Heart right ventricle (tissue), 16 donors: ENCODE measurements at regions of chr16 and their contacts with region 1.

Region 1: GRCh38 chr16:4116337-4117249 is at the start of gene ADCY9:
- DNase-seq: peak; percentile 68 to 88
- ATAC-seq: peak; percentile 70 to 89 (median 80)
- H3K4me3 ChIP-seq: peak within 1 kb of the TSS; percentile 56 to 80 (median 74)
- H3K27ac ChIP-seq: peak within 1 kb of the TSS; percentile 59 to 89 (median 86)
- H3K4me1 ChIP-seq: peaks cover 13 to 49% (median 44%) of the 10 kb centered on the region in 9 donors
- H3K27me3 ChIP-seq: no peaks in the 10 kb centered on the region
- CTCF ChIP-seq: peak in 1 of 9 donors; percentile 2
- total RNA-seq, gene ADCY9: 37.3 to 57.6 (median 43.4) TPM

Region 2: DNA sequence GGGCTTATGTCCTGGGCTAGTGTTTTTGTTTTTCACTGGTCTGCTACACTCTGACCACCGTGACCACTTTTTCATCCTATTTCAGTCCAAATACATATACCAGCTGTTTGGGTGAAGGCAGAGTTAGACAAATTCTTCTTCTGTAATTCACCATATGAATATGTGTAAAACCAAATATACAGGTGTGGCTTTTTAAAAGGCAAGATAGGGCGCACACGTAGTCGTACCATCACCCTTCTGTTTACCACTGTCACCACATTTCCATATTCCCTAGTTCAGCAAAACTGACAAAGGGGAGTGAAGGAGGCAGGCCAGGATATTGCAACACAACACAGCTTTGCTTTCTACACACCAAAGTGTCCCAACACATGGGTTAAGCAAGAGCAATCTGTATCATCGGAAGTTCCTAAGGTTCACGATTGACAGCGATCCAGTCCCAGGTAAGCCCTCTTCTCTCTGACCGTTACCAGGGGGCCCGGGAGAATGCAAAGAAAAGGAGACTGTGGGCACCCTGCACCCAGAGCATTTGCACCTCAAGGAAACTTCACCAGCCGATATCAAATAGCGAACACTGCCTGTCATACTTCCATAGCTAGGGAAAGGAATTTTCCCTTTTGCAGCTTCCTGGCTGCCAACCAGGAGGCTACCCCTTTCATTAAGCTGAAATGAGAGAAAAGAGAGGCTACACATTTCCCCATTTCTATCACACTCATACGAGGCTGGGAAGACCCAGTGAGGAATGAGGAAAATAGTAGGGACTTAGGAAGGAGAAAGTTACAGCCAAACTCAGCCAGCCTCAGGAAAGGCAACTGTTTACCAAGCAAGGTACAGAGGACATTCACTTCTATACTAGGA is 259.2 kb before region 1 on chr16:
- intact Hi-C with region 1: no loop called
- DNase-seq: no peak
- ATAC-seq: peak; percentile 46 to 88 (median 54)
- H3K4me3 ChIP-seq: no peak overlapping the region
- H3K27ac ChIP-seq: peak overlapping the region in 4 of 10 donors; percentile 3 to 57 (median 33)
- H3K4me1 ChIP-seq: peaks cover 9 to 100% (median 95%) of the 10 kb centered on the region in 9 donors
- H3K27me3 ChIP-seq: no peaks in the 10 kb centered on the region
- CTCF ChIP-seq: no peak

Region 3: GRCh38 chr16:3983081-3983520 is 133.5 kb before region 1 on chr16:
- intact Hi-C with region 1: loop called in 4 of 10 experiments (anchors 5 to 10 kb)
- DNase-seq: peak; percentile 65 to 73
- ATAC-seq: peak; percentile 72 to 88 (median 83)
- H3K4me3 ChIP-seq: no peak overlapping the region
- H3K27ac ChIP-seq: no peak overlapping the region
- H3K4me1 ChIP-seq: peaks cover 0 to 11% (median 0%) of the 10 kb centered on the region in 9 donors
- H3K27me3 ChIP-seq: no peaks in the 10 kb centered on the region
- CTCF ChIP-seq: peak; percentile 29 to 85 (median 74)

Region 4: DNA sequence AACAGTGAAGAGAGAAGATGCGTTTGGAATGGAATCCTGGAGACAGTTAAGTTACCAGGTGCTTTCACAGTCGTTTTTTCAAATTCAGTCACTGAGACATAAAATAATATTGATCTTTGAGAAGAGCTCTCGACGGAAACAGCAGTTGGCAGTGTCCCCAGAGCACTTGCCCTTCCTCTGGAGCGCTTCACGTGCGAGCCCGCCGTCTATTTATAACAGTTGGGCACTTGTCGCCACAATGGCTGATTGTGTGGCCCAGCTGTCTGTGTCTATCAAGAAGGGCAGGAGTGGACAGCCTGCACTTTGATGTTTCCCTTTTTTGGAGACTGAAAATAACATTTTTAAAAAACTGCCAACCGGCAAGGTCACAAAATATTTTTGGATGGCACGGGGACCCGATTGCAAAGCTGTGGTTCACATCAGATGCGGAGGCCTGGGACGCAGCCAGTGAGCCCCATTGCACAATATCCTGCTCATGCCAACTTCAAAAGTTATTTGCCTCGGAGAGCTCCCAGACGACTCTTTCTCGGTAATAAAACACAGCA is 63.2 kb before region 1 on chr16:
- intact Hi-C with region 1: loop called in 2 of 10 experiments (anchors 5 kb)
- DNase-seq: peak; percentile 70 to 78
- ATAC-seq: peak; percentile 78 to 95 (median 90)
- H3K4me3 ChIP-seq: peak overlapping the region in 8 of 10 donors; percentile 2 to 39 (median 26)
- H3K27ac ChIP-seq: peak overlapping the region; percentile 42 to 86 (median 77)
- H3K4me1 ChIP-seq: peaks cover 3 to 38% (median 27%) of the 10 kb centered on the region in 9 donors
- H3K27me3 ChIP-seq: no peaks in the 10 kb centered on the region
- CTCF ChIP-seq: no peak

Region 5: GRCh38 chr16:4183237-4184036 is 66.8 kb after region 1 on chr16:
- intact Hi-C with region 1: loop called in 6 of 10 experiments (anchors 5 to 10 kb)
- DNase-seq: peak; percentile 91 to 97
- ATAC-seq: peak; percentile 95 to 98 (median 96)
- H3K4me3 ChIP-seq: peak overlapping the region; percentile 62 to 84 (median 72)
- H3K27ac ChIP-seq: peak overlapping the region; percentile 79 to 100 (median 94)
- H3K4me1 ChIP-seq: peaks cover 3 to 20% (median 8%) of the 10 kb centered on the region in 9 donors
- H3K27me3 ChIP-seq: peaks cover 0 to 13% (median 0%) of the 10 kb centered on the region in 7 donors
- CTCF ChIP-seq: peak in 4 of 9 donors; percentile 11 to 45 (median 42)

Region 6: GRCh38 chr16:4253394-4254150 is 137.0 kb after region 1 on chr16:
- intact Hi-C with region 1: loop called in 8 of 10 experiments (anchors 1 to 10 kb)
- DNase-seq: peak; percentile 100
- ATAC-seq: peak; percentile 97 to 99 (median 97)
- H3K4me3 ChIP-seq: peak overlapping the region; percentile 50 to 78 (median 64)
- H3K27ac ChIP-seq: peak overlapping the region; percentile 47 to 97 (median 93)
- H3K4me1 ChIP-seq: peaks cover 0 to 13% (median 5%) of the 10 kb centered on the region in 9 donors
- H3K27me3 ChIP-seq: no peaks in the 10 kb centered on the region
- CTCF ChIP-seq: no peak

Region 7: GRCh38 chr16:4298761-4299522 is 182.3 kb after region 1 on chr16:
- intact Hi-C with region 1: no loop called
- DNase-seq: peak; percentile 73 to 79
- ATAC-seq: peak; percentile 76 to 96 (median 92)
- H3K4me3 ChIP-seq: peak overlapping the region in 2 of 10 donors; percentile 1 to 18
- H3K27ac ChIP-seq: peak overlapping the region in 9 of 10 donors; percentile 56 to 90 (median 76)
- H3K4me1 ChIP-seq: peaks cover 8 to 26% (median 23%) of the 10 kb centered on the region in 9 donors
- H3K27me3 ChIP-seq: no peaks in the 10 kb centered on the region
- CTCF ChIP-seq: peak in 1 of 9 donors; percentile 3